CD4-positive, alpha-beta T cell (primary cell): ENCODE measurements at regions of chr21 and their contacts with region 1.

Region 1: GRCh38 chr21:36966066-36966820 is at the start of gene HLCS:
- DNase-seq: peak; percentile 50 to 92 (median 69)
- ATAC-seq: peak; percentile 94
- H3K4me3 ChIP-seq: peak within 1 kb of the TSS; percentile 63
- H3K4me3 Mint-ChIP-seq: peak within 1 kb of the TSS; percentile 85
- H3K27ac ChIP-seq: peak within 1 kb of the TSS; percentile 48 to 63
- H3K27ac Mint-ChIP-seq: peak within 1 kb of the TSS; percentile 84
- H3K4me1 ChIP-seq: peaks cover 16% of the 10 kb centered on the region
- H3K4me1 Mint-ChIP-seq: peaks cover 20% of the 10 kb centered on the region
- H3K27me3 ChIP-seq: no peaks in the 10 kb centered on the region
- H3K27me3 Mint-ChIP-seq: no peaks in the 10 kb centered on the region
- CTCF ChIP-seq: no peak
- total RNA-seq, gene HLCS: 8.1 to 10.0 TPM

Region 2: GRCh38 chr21:36069713-36070573 is 896.3 kb before region 1 on chr21 and contains the start of gene CBR1:
- CTCF ChIA-PET with region 1: no interaction called
- POLR2A ChIA-PET with region 1: no interaction called
- intact Hi-C with region 1: loop called in 1 of 2 experiments (anchors 10 kb)
- DNase-seq: peak; percentile 76 to 95 (median 87)
- ATAC-seq: peak; percentile 99
- H3K4me3 ChIP-seq: peak within 1 kb of the TSS; percentile 76
- H3K4me3 Mint-ChIP-seq: peak within 1 kb of the TSS; percentile 79
- H3K27ac ChIP-seq: peak within 1 kb of the TSS; percentile 44 to 51
- H3K27ac Mint-ChIP-seq: peak within 1 kb of the TSS; percentile 78
- H3K4me1 ChIP-seq: peaks cover 38% of the 10 kb centered on the region
- H3K4me1 Mint-ChIP-seq: peaks cover 45% of the 10 kb centered on the region
- H3K27me3 ChIP-seq: no peaks in the 10 kb centered on the region
- H3K27me3 Mint-ChIP-seq: no peaks in the 10 kb centered on the region
- CTCF ChIP-seq: no peak
- total RNA-seq, gene CBR1: 5.2 to 6.8 TPM

Region 3: GRCh38 chr21:36909901-36910561 is 56.2 kb before region 1 on chr21:
- CTCF ChIA-PET with region 1: no interaction called
- POLR2A ChIA-PET with region 1: no interaction called
- intact Hi-C with region 1: no loop called
- DNase-seq: peak in 3 of 14 experiments; percentile 2 to 30 (median 12)
- ATAC-seq: peak; percentile 14
- H3K4me3 ChIP-seq: no peak overlapping the region
- H3K4me3 Mint-ChIP-seq: no peak overlapping the region
- H3K27ac ChIP-seq: no peak overlapping the region
- H3K27ac Mint-ChIP-seq: no peak overlapping the region
- H3K4me1 ChIP-seq: no peaks in the 10 kb centered on the region
- H3K4me1 Mint-ChIP-seq: peaks cover 9% of the 10 kb centered on the region
- H3K27me3 ChIP-seq: no peaks in the 10 kb centered on the region
- H3K27me3 Mint-ChIP-seq: no peaks in the 10 kb centered on the region
- CTCF ChIP-seq: no peak

Region 4: GRCh38 chr21:36989699-36990507 is 23.7 kb after region 1 on chr21:
- CTCF ChIA-PET with region 1: interaction called, 14 read pairs
- POLR2A ChIA-PET with region 1: interaction called, 20 read pairs
- intact Hi-C with region 1: loop called in 1 of 2 experiments (anchors 2 kb)
- DNase-seq: peak; percentile 51 to 93 (median 78)
- ATAC-seq: peak; percentile 62
- H3K4me3 ChIP-seq: peak overlapping the region; percentile 60
- H3K4me3 Mint-ChIP-seq: peak overlapping the region; percentile 89
- H3K27ac ChIP-seq: peak overlapping the region; percentile 62 to 64
- H3K27ac Mint-ChIP-seq: peak overlapping the region; percentile 59
- H3K4me1 ChIP-seq: peaks cover 21% of the 10 kb centered on the region
- H3K4me1 Mint-ChIP-seq: peaks cover 25% of the 10 kb centered on the region
- H3K27me3 ChIP-seq: no peaks in the 10 kb centered on the region
- H3K27me3 Mint-ChIP-seq: no peaks in the 10 kb centered on the region
- CTCF ChIP-seq: peak; percentile 92

Region 5: GRCh38 chr21:37009740-37010341 is 43.6 kb after region 1 on chr21:
- CTCF ChIA-PET with region 1: interaction called, 6 read pairs
- POLR2A ChIA-PET with region 1: interaction called, 3 read pairs
- intact Hi-C with region 1: loop called (anchors 5 kb)
- DNase-seq: peak; percentile 62 to 87 (median 74)
- ATAC-seq: peak; percentile 94
- H3K4me3 ChIP-seq: peak overlapping the region; percentile 13
- H3K4me3 Mint-ChIP-seq: peak overlapping the region; percentile 76
- H3K27ac ChIP-seq: no peak overlapping the region
- H3K27ac Mint-ChIP-seq: no peak overlapping the region
- H3K4me1 ChIP-seq: peaks cover 28% of the 10 kb centered on the region
- H3K4me1 Mint-ChIP-seq: peaks cover 15% of the 10 kb centered on the region
- H3K27me3 ChIP-seq: peaks cover 24 to 31% of the 10 kb centered on the region in 2 experiments
- H3K27me3 Mint-ChIP-seq: peaks cover 51% of the 10 kb centered on the region
- CTCF ChIP-seq: peak; percentile 88

Region 6: DNA sequence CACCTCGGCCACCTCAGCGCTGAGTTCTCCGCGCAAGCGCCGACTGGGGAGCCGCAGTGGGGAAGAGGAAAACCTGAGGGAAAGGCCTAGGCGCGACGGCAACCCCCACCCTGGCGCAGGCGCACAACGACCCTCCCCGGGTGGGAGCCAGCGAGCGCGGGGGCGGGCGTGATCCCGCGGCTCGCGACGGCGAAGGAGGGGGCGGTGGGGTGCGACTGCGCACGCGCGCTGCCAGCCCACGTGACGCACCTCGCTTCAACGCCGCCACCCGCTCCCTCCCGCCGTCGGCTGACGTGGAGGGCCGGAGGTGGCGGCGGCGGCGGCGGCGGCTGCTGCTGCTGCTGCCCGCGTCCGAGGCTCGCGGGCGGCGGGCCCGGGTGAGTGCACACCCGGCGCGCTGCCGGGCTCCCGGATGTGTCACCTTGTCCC is 106.8 kb after region 1 on chr21 and contains the starts of genes PIGP and TTC3:
- CTCF ChIA-PET with region 1: no interaction called
- POLR2A ChIA-PET with region 1: interaction called, 3 read pairs
- intact Hi-C with region 1: loop called (anchors 2 to 5 kb)
- DNase-seq: peak; percentile 92 to 99 (median 95)
- ATAC-seq: peak; percentile 64
- H3K4me3 ChIP-seq: peak within 1 kb of the TSS; percentile 88
- H3K4me3 Mint-ChIP-seq: peak within 1 kb of the TSS; percentile 98
- H3K27ac ChIP-seq: peak within 1 kb of the TSS; percentile 93
- H3K27ac Mint-ChIP-seq: peak within 1 kb of the TSS; percentile 94
- H3K4me1 ChIP-seq: peaks cover 22% of the 10 kb centered on the region
- H3K4me1 Mint-ChIP-seq: peaks cover 60% of the 10 kb centered on the region
- H3K27me3 ChIP-seq: no peaks in the 10 kb centered on the region
- H3K27me3 Mint-ChIP-seq: no peaks in the 10 kb centered on the region
- CTCF ChIP-seq: no peak
- total RNA-seq, gene PIGP: 11.1 to 14.8 TPM
- total RNA-seq, gene TTC3: 141 to 142 TPM

Region 7: GRCh38 chr21:37153196-37153934 is 187.1 kb after region 1 on chr21:
- CTCF ChIA-PET with region 1: no interaction called
- POLR2A ChIA-PET with region 1: no interaction called
- intact Hi-C with region 1: no loop called
- DNase-seq: no peak
- ATAC-seq: no peak
- H3K4me3 ChIP-seq: no peak overlapping the region
- H3K4me3 Mint-ChIP-seq: no peak overlapping the region
- H3K27ac ChIP-seq: no peak overlapping the region
- H3K27ac Mint-ChIP-seq: no peak overlapping the region
- H3K4me1 ChIP-seq: no peaks in the 10 kb centered on the region
- H3K4me1 Mint-ChIP-seq: no peaks in the 10 kb centered on the region
- H3K27me3 ChIP-seq: no peaks in the 10 kb centered on the region
- H3K27me3 Mint-ChIP-seq: no peaks in the 10 kb centered on the region
- CTCF ChIP-seq: no peak

Region 8: GRCh38 chr21:37267269-37268184 is 301.3 kb after region 1 on chr21 and contains the start of gene VPS26C:
- CTCF ChIA-PET with region 1: no interaction called
- POLR2A ChIA-PET with region 1: no interaction called
- intact Hi-C with region 1: loop called in 1 of 2 experiments (anchors 10 kb)
- DNase-seq: peak; percentile 94 to 100 (median 96)
- ATAC-seq: peak; percentile 84
- H3K4me3 ChIP-seq: peak within 1 kb of the TSS; percentile 90
- H3K4me3 Mint-ChIP-seq: peak within 1 kb of the TSS; percentile 93
- H3K27ac ChIP-seq: peak within 1 kb of the TSS; percentile 96 to 98
- H3K27ac Mint-ChIP-seq: peak within 1 kb of the TSS; percentile 97
- H3K4me1 ChIP-seq: peaks cover 19% of the 10 kb centered on the region
- H3K4me1 Mint-ChIP-seq: peaks cover 56% of the 10 kb centered on the region
- H3K27me3 ChIP-seq: no peaks in the 10 kb centered on the region
- H3K27me3 Mint-ChIP-seq: no peaks in the 10 kb centered on the region
- CTCF ChIP-seq: no peak
- total RNA-seq, gene VPS26C: 31.8 to 36.0 TPM